Activated B cell treated with CpG ODN at 0.5 μM for 24 hours (primary cell): ENCODE measurements at regions of chr2 and their contacts with region 1.

Region 1: GRCh38 chr2:213806125-213806726 is 522.0 kb downstream of the SPAG16 start:
- DNase-seq: no peak
- ATAC-seq: no peak
- H3K4me3 Mint-ChIP-seq: no peak overlapping the region
- H3K27ac Mint-ChIP-seq: no peak overlapping the region
- H3K4me1 Mint-ChIP-seq: no peaks in the 10 kb centered on the region
- H3K27me3 Mint-ChIP-seq: no peaks in the 10 kb centered on the region
- CTCF ChIP-seq: no peak

Region 2: DNA sequence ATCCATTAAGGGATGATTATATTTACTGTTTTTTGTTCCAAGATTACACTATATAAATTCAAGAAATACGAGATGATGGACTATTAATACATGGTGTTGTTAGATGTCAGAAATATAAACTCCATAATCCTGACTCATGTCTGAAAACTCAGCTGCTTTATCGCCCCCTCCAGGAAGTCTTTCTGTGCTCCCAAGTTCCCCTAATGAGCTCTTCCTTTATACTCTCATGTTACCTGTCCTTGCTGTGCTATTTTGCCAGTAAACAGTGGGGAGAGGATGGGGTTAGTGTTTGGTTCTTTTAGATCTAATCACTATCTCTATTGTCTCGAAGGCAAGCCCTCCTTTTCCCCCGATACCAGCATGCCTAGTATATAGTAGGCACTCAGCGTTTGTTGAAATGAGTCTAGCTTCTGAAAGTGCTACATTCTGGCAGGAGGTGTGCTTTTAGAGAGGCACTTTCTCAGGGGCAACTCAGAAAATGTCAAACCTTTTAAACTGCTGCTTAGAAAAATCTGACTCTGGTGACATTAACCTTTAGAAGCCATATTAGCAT is 1024.6 kb after region 1 on chr2:
- CTCF ChIA-PET with region 1: interaction called, 3 read pairs
- POLR2A ChIA-PET with region 1: no interaction called
- intact Hi-C with region 1: loop called (anchors 5 kb)
- DNase-seq: no peak
- ATAC-seq: no peak
- H3K4me3 Mint-ChIP-seq: no peak overlapping the region
- H3K27ac Mint-ChIP-seq: no peak overlapping the region
- H3K4me1 Mint-ChIP-seq: no peaks in the 10 kb centered on the region
- H3K27me3 Mint-ChIP-seq: no peaks in the 10 kb centered on the region
- CTCF ChIP-seq: no peak

Region 3: DNA sequence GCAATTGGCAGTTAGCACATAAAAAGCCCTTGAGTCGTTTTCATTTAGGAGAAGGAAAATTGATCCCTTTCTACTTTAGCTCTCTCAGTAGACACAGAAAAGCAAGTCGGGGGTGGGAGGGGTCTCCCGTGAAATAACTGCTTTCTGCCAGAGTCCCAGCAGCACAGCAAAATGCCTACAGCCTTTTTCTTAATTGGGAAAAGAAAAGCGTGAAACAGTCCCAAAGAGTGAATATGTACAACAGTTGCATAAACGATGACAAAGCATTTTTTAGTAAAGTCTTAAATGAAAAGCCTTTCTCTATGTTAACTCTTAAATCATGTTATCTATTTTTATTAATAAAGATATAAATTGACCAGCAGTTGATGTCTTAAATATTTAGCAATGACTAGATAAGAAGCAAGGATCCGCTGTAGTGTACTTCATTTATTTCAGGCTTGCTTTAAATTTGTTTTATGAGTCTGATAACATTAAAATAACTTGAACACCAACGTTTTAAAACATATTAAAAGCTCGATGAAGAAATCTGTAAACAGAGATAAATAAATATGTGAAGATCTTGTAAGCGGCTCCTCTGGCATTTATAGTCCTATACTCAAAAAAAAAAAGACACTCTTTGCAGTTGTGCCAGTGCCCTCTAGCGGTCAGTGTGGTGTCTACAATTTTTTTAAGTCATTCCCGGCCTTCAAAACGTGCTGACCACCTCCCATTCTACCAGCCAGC is 1463.3 kb after region 1 on chr2:
- CTCF ChIA-PET with region 1: no interaction called
- POLR2A ChIA-PET with region 1: no interaction called
- intact Hi-C with region 1: loop called (anchors 2 kb)
- DNase-seq: no peak
- ATAC-seq: no peak
- H3K4me3 Mint-ChIP-seq: no peak overlapping the region
- H3K27ac Mint-ChIP-seq: no peak overlapping the region
- H3K4me1 Mint-ChIP-seq: no peaks in the 10 kb centered on the region
- H3K27me3 Mint-ChIP-seq: no peaks in the 10 kb centered on the region
- CTCF ChIP-seq: peak; percentile 24